ENCODE measurements at regions of chr10 and their contacts with region 1.

Region 1: GRCh38 chr10:45308707-45309106 is 6.7 kb downstream of the OR13A1 start:
- DNase-seq: no peak
- H3K4me3 ChIP-seq: no peak overlapping the region
- H3K27ac ChIP-seq: no peak overlapping the region
- H3K4me1 ChIP-seq: no peaks in the 10 kb centered on the region
- H3K27me3 ChIP-seq: 0 out of 2 replicates have a peak, but pooled peaks cover under 1% of the 10 kb centered on the region
- CTCF ChIP-seq: peak; percentile 52

Region 2: GRCh38 chr10:45433716-45434469 is 125.2 kb after region 1 on chr10:
- CTCF ChIA-PET with region 1: no interaction called
- POLR2A ChIA-PET with region 1: no interaction called
- intact Hi-C with region 1: loop called (anchors 5 kb)
- DNase-seq: no peak
- H3K4me3 ChIP-seq: no peak overlapping the region
- H3K27ac ChIP-seq: no peak overlapping the region
- H3K4me1 ChIP-seq: no peaks in the 10 kb centered on the region
- H3K27me3 ChIP-seq: no peaks in the 10 kb centered on the region
- CTCF ChIP-seq: no peak

Region 3: DNA sequence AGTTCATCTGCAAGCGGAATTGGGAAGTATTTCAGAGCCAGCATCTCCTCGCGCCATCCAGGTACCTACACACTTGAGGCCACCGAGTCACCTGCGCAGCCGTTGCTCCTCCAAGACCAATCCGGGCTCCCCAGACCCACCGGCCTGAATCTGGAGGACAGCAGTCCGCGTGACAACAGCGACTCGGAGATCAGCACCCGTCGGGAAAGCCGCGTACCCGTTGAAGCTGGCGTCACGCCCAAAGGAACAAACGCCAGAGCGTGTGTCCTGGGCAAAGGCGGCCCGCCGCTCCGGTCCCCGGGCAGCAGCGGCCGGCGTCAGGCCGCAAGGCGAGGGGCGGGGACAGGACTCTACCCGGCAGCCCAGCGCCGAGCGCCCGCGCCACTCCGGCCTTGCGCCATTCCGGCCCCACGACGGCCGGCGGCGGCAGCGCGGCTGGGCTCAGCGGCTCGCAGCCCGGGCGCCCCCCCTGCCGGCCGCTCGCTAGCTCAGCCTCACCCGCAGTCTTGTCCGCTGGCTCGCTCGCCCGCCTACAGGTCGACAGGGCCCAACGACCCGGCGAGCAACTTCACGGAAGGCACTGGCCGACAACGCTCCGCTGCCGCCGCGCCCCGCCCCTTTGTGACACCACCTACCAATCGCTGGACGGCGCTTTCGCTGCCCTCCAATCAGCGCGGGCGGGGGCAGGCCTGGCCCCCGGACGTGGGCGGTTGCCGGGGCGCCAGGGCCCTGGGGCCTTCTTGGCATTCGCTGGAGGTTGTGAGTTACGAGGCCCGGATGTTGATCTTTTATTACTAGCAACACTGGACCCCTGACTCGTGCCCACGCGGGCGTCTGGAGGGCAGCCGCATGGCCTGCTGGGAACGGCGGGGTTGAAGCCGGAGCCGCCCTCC is 363.7 kb after region 1 on chr10 and contains the start of gene ZFAND4:
- CTCF ChIA-PET with region 1: no interaction called
- POLR2A ChIA-PET with region 1: no interaction called
- intact Hi-C with region 1: loop called (anchors 10 kb)
- DNase-seq: peak; percentile 88 to 97
- H3K4me3 ChIP-seq: peak within 1 kb of the TSS; percentile 70
- H3K27ac ChIP-seq: 0 out of 2 replicates have a peak within 1 kb of the TSS, but pooled peaks have one; percentile 7
- H3K4me1 ChIP-seq: peaks cover 8% of the 10 kb centered on the region; the same call in 1 of the 2 replicates
- H3K27me3 ChIP-seq: no peaks in the 10 kb centered on the region
- CTCF ChIP-seq: peak; percentile 52; the same call in 1 of the 2 replicates
- total RNA-seq, gene ZFAND4: 3.5 and 4.4 TPM in 2 replicates

Region 4: GRCh38 chr10:45809837-45810236 is 501.1 kb after region 1 on chr10:
- CTCF ChIA-PET with region 1: no interaction called
- POLR2A ChIA-PET with region 1: no interaction called
- intact Hi-C with region 1: loop called (anchors 10 kb)
- DNase-seq: no peak
- H3K4me3 ChIP-seq: no peak overlapping the region
- H3K27ac ChIP-seq: no peak overlapping the region
- H3K4me1 ChIP-seq: no peaks in the 10 kb centered on the region
- H3K27me3 ChIP-seq: peaks cover 21% of the 10 kb centered on the region
- CTCF ChIP-seq: 0 out of 2 replicates have a peak, but pooled peaks have one; percentile 32

Measured in PC-9 (cell line).